Ascending aorta (tissue), 2 donors: ENCODE measurements at regions of chr14 and their contacts with region 1.

Region 1: DNA sequence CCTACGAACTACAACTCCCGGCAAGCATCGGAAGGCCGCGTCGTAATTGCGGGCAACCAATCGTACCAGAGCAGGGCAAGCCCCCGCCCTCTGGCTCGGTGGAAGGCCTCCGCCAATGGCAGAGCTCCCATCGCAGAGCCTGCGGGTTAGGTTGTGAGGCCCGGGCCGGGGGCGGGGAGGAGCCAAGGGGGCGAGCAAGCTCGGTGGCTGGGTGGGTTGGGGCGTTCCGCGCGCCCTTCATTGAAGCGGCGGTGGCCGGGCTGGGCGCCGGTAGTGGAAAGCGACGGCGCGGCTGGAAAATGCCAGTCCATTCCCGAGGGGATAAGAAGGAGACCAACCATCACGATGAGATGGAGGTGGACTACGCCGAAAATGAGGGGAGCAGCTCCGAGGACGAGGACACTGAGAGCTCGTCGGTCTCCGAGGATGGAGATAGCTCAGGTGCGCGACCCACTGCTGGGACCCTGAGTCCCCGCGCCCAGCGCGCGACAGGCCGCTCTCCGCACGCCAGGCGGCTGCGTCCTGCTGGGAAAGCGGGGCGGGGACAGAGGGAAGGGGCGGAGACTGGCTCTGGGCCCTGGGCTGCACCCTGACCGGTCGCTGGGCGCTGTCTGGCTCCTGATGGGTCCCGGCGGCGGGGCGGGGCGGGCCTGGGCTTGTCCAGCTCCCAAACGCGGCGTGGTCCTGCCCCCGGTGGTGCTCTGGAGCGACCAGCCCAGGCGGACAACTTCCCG is at the start of gene BRMS1L:
- DNase-seq: peak; percentile 96 to 99
- H3K4me3 ChIP-seq: peak within 1 kb of the TSS; percentile 90 to 92
- H3K27ac ChIP-seq: peak within 1 kb of the TSS; percentile 98 to 99
- H3K4me1 ChIP-seq: peaks cover 0 to 4% of the 10 kb centered on the region in 2 donors
- H3K27me3 ChIP-seq: no peaks in the 10 kb centered on the region
- CTCF ChIP-seq: no peak
- total RNA-seq, gene BRMS1L: 7.7 TPM

Region 2: DNA sequence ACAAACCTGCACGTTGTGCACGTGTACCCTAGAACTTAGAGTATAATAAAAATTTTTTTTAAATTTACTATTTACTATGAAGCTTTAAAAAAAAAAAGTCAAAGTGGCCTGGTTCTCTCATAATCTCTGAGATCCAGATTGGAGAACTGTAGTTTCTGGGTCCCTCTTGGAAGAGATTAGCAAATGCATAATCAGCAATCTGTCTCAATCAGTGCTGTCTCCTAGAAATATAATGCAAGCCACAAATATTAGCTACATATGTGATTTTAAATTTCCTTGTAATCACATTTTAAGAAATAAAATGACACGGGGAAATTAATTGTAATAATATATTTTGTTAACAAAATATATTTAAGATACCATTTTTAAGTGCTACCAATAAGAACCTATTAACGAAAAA is 49.6 kb before region 1 on chr14:
- intact Hi-C with region 1: no loop called
- DNase-seq: no peak
- H3K4me3 ChIP-seq: no peak overlapping the region
- H3K27ac ChIP-seq: no peak overlapping the region
- H3K4me1 ChIP-seq: no peaks in the 10 kb centered on the region
- H3K27me3 ChIP-seq: no peaks in the 10 kb centered on the region
- CTCF ChIP-seq: no peak

Region 3: GRCh38 chr14:35808076-35808652 is 18.2 kb before region 1 on chr14:
- intact Hi-C with region 1: loop called (anchors 1 kb)
- DNase-seq: no peak
- H3K4me3 ChIP-seq: peak overlapping the region; percentile 60 to 93
- H3K27ac ChIP-seq: peak overlapping the region; percentile 87 to 97
- H3K4me1 ChIP-seq: peaks cover 0 to 16% of the 10 kb centered on the region in 2 donors
- H3K27me3 ChIP-seq: no peaks in the 10 kb centered on the region
- CTCF ChIP-seq: no peak

Region 4: GRCh38 chr14:35867273-35867629 is 40.9 kb after region 1 on chr14:
- intact Hi-C with region 1: loop called (anchors 2 kb)
- DNase-seq: no peak
- H3K4me3 ChIP-seq: no peak overlapping the region
- H3K27ac ChIP-seq: peak overlapping the region; percentile 30 to 64
- H3K4me1 ChIP-seq: peaks cover 0 to 11% of the 10 kb centered on the region in 2 donors
- H3K27me3 ChIP-seq: no peaks in the 10 kb centered on the region
- CTCF ChIP-seq: no peak